Psoas muscle (tissue), 8 donors: ENCODE measurements at regions of chr2 and their contacts with region 1.

Region 1: GRCh38 chr2:27954771-27955383 is 64.3 kb downstream of the BABAM2 start:
- DNase-seq: peak; percentile 59 to 63
- ATAC-seq: peak; percentile 91 to 95 (median 94)
- H3K4me3 ChIP-seq: peak overlapping the region; percentile 31
- H3K27ac ChIP-seq: peak overlapping the region; percentile 69
- H3K4me1 ChIP-seq: peaks cover 50% of the 10 kb centered on the region
- H3K27me3 ChIP-seq: no peaks in the 10 kb centered on the region
- CTCF ChIP-seq: peak; percentile 35

Region 2: GRCh38 chr2:27914041-27914804 is 40.7 kb before region 1 on chr2:
- intact Hi-C with region 1: loop called (anchors 5 kb)
- DNase-seq: no peak
- ATAC-seq: peak in 3 of 4 donors; percentile 23 to 34 (median 31)
- H3K4me3 ChIP-seq: no peak overlapping the region
- H3K27ac ChIP-seq: peak overlapping the region; percentile 84
- H3K4me1 ChIP-seq: peaks cover 48% of the 10 kb centered on the region
- H3K27me3 ChIP-seq: no peaks in the 10 kb centered on the region
- CTCF ChIP-seq: no peak